ENCODE measurements at regions of chr3 and their contacts with region 1.

Region 1: GRCh38 chr3:150603153-150603979 is at the start of gene SELENOT:
- DNase-seq: peak; percentile 95
- H3K4me3 Mint-ChIP-seq: peak within 1 kb of the TSS; percentile 98
- H3K27ac Mint-ChIP-seq: peak within 1 kb of the TSS; percentile 98
- H3K4me1 Mint-ChIP-seq: peaks cover 64% of the 10 kb centered on the region
- H3K27me3 Mint-ChIP-seq: no peaks in the 10 kb centered on the region
- total RNA-seq, gene SELENOT: 124 to 130 TPM

Region 2: DNA sequence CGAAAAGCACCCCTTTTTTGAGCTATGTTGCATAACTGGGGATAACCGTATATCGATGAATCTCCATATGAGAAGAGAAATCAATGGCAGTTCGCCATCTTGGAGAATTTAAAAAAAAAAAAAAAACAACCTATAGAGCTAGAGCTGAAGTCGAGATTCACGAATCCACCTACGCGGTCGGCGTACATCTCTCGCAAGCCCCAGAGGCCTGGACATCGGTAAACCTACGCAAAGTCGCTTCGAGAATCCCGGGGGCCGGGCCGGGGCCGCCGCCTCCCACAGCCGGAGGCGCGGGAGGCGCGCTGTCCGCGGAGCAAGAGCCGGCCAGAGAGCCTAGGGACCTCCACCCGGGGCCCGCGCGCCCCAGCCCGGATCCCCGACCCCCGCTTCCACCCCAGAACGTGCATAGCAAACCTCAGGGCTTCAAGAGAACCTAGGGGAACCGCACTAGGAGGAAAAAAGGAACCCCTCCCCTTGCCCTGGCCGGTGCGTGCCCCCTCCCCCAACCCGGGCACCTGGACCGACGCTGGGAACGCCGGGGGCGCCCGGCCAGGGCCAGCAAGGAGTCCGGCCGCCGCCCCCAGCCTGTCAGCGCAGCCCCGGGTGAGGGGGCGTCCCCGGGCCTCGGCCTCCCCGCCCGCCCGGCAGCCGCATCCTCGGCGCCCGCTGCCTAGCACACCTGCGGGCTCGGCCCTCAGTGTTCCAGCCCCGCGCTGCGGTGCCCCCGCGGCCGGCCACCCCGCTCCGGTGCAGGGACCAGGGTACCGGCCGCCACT is 633.2 kb before region 1 on chr3:
- CTCF ChIA-PET with region 1: no interaction called
- POLR2A ChIA-PET with region 1: no interaction called
- DNase-seq: peak; percentile 68
- H3K4me3 Mint-ChIP-seq: peak overlapping the region; percentile 71
- H3K27ac Mint-ChIP-seq: no peak overlapping the region
- H3K4me1 Mint-ChIP-seq: peaks cover 17% of the 10 kb centered on the region
- H3K27me3 Mint-ChIP-seq: peaks cover 40% of the 10 kb centered on the region

Region 3: DNA sequence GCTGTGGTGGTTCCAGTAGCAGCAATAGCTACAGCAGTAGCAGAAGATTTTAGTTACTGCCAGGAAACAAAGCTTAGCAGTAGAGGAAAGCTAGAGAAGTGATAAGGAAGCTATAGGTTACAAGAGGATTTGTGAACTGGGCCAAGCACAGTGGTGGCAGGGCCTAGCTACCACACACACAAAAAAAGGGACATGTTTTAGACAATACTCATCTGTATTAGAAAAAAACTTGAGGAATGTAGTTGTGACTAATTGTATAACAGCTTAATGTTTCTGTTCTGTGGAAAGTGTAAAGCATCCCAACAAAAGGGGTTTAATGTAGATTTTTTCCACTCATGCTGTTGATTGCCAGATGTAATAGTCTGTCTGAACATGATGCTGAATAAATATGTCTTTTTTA is 602.7 kb before region 1 on chr3:
- CTCF ChIA-PET with region 1: no interaction called
- POLR2A ChIA-PET with region 1: no interaction called
- DNase-seq: no peak
- H3K4me3 Mint-ChIP-seq: no peak overlapping the region
- H3K27ac Mint-ChIP-seq: no peak overlapping the region
- H3K4me1 Mint-ChIP-seq: no peaks in the 10 kb centered on the region
- H3K27me3 Mint-ChIP-seq: peaks cover 19% of the 10 kb centered on the region

Region 4: GRCh38 chr3:150158943-150159625 is 444.3 kb before region 1 on chr3:
- CTCF ChIA-PET with region 1: no interaction called
- POLR2A ChIA-PET with region 1: no interaction called
- DNase-seq: no peak
- H3K4me3 Mint-ChIP-seq: no peak overlapping the region
- H3K27ac Mint-ChIP-seq: no peak overlapping the region
- H3K4me1 Mint-ChIP-seq: no peaks in the 10 kb centered on the region
- H3K27me3 Mint-ChIP-seq: peaks cover 15% of the 10 kb centered on the region

Region 5: GRCh38 chr3:150546226-150547044 is 56.9 kb before region 1 on chr3 and contains the starts of genes EIF2A and SERP1:
- CTCF ChIA-PET with region 1: interaction called, 4 read pairs
- POLR2A ChIA-PET with region 1: interaction called, 94 read pairs
- DNase-seq: peak; percentile 99
- H3K4me3 Mint-ChIP-seq: peak within 1 kb of the TSS; percentile 85
- H3K27ac Mint-ChIP-seq: peak within 1 kb of the TSS; percentile 97
- H3K4me1 Mint-ChIP-seq: peaks cover 61% of the 10 kb centered on the region
- H3K27me3 Mint-ChIP-seq: no peaks in the 10 kb centered on the region
- total RNA-seq, gene EIF2A: 81.7 to 86.4 TPM
- total RNA-seq, gene SERP1: 98.4 to 98.5 TPM

Region 6: GRCh38 chr3:150588027-150588830 is 15.1 kb before region 1 on chr3:
- CTCF ChIA-PET with region 1: interaction called, 8 read pairs
- POLR2A ChIA-PET with region 1: interaction called, 27 read pairs
- DNase-seq: no peak
- H3K4me3 Mint-ChIP-seq: no peak overlapping the region
- H3K27ac Mint-ChIP-seq: peak overlapping the region; percentile 3
- H3K4me1 Mint-ChIP-seq: peaks cover 17% of the 10 kb centered on the region
- H3K27me3 Mint-ChIP-seq: no peaks in the 10 kb centered on the region

Region 7: DNA sequence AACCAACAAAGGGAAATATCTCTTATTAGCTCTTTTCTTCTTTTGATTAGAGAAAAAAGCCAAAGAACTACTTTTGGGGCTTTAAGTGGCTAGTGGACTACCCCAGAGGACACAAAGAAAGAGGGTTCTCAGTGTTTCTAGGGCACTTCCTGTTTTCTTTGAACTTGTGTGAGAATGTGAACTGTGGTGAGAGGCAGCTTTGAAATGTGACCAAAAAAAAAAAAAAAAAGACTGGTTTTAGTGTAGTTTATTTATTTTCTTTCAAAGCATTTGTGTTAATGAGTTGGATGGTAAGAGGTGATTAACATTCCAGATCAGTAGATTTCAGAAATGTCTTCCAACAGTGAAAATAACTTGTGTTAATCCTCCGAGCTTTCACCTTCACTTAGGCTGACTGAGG is 32.2 kb after region 1 on chr3:
- CTCF ChIA-PET with region 1: interaction called, 3 read pairs
- POLR2A ChIA-PET with region 1: interaction called, 11 read pairs
- DNase-seq: no peak
- H3K4me3 Mint-ChIP-seq: no peak overlapping the region
- H3K27ac Mint-ChIP-seq: peak overlapping the region; percentile 72
- H3K4me1 Mint-ChIP-seq: peaks cover 35% of the 10 kb centered on the region
- H3K27me3 Mint-ChIP-seq: no peaks in the 10 kb centered on the region

Region 8: DNA sequence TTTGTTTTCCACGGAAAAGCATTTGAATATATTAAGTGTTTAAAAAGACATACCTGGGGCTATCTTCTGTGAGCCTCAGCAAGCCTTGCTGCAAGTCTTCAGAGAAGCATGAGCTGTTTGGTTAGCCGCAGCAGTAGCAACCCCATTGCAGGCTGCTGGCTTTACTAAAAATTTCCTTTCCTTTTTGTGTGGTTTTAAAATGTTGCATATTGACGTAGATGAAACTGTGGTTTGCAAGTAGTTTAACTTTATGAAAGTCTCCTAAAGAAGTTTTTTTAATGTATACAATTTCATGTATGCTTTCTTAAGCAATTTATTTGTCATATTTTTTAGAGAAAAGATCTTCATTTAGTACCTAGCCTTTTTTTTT is 599.7 kb after region 1 on chr3 and contains the start of gene GPR171:
- CTCF ChIA-PET with region 1: no interaction called
- POLR2A ChIA-PET with region 1: interaction called, 13 read pairs
- DNase-seq: peak; percentile 82
- H3K4me3 Mint-ChIP-seq: peak within 1 kb of the TSS; percentile 90
- H3K27ac Mint-ChIP-seq: peak within 1 kb of the TSS; percentile 98
- H3K4me1 Mint-ChIP-seq: peaks cover 60% of the 10 kb centered on the region
- H3K27me3 Mint-ChIP-seq: no peaks in the 10 kb centered on the region
- total RNA-seq, gene GPR171: 204 to 222 TPM